Natural killer cell (primary cell): ENCODE measurements at regions of chr18 and their contacts with region 1.

Region 1: GRCh38 chr18:67302043-67302442 is 214.5 kb downstream of the DSEL start:
- DNase-seq: peak in 1 of 2 donors; percentile 9
- ATAC-seq: peak in 1 of 3 donors; percentile 31
- H3K4me3 ChIP-seq: no peak overlapping the region
- H3K4me3 Mint-ChIP-seq: no peak overlapping the region
- H3K27ac ChIP-seq: no peak overlapping the region
- H3K27ac Mint-ChIP-seq: peak overlapping the region in 1 of 2 donors; percentile 23
- H3K4me1 ChIP-seq: no peaks in the 10 kb centered on the region
- H3K4me1 Mint-ChIP-seq: peaks cover 0 to 8% of the 10 kb centered on the region in 2 donors
- H3K27me3 ChIP-seq: no peaks in the 10 kb centered on the region
- H3K27me3 Mint-ChIP-seq: no peaks in the 10 kb centered on the region
- CTCF ChIP-seq: no peak

Region 2: GRCh38 chr18:67290421-67290820 is 11.6 kb before region 1 on chr18:
- intact Hi-C with region 1: no loop called
- DNase-seq: no peak
- ATAC-seq: no peak
- H3K4me3 ChIP-seq: no peak overlapping the region
- H3K4me3 Mint-ChIP-seq: no peak overlapping the region
- H3K27ac ChIP-seq: no peak overlapping the region
- H3K27ac Mint-ChIP-seq: no peak overlapping the region
- H3K4me1 ChIP-seq: no peaks in the 10 kb centered on the region
- H3K4me1 Mint-ChIP-seq: no peaks in the 10 kb centered on the region
- H3K27me3 ChIP-seq: no peaks in the 10 kb centered on the region
- H3K27me3 Mint-ChIP-seq: no peaks in the 10 kb centered on the region
- CTCF ChIP-seq: no peak

Region 3: DNA sequence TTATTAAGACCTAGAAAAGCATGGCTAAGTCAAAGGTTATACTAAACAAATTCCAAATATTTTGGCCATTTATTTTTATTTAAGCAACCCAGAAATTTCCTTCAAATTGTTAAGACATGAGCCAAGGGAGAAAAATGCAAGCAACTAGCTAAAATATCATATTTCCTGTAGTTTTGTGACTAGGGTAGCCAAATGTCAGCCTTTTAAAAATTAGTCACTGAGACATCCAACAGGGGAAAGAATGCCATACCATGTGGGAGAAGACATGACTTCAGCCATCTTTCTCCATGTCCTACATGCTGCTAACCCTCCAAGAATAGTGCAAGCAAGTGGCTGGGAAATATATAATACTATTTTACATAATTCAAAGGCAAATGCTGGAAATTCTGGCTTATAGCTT is 16.6 kb after region 1 on chr18:
- intact Hi-C with region 1: loop called (anchors 2 kb)
- DNase-seq: no peak
- ATAC-seq: no peak
- H3K4me3 ChIP-seq: no peak overlapping the region
- H3K4me3 Mint-ChIP-seq: no peak overlapping the region
- H3K27ac ChIP-seq: no peak overlapping the region
- H3K27ac Mint-ChIP-seq: no peak overlapping the region
- H3K4me1 ChIP-seq: no peaks in the 10 kb centered on the region
- H3K4me1 Mint-ChIP-seq: no peaks in the 10 kb centered on the region
- H3K27me3 ChIP-seq: no peaks in the 10 kb centered on the region
- H3K27me3 Mint-ChIP-seq: no peaks in the 10 kb centered on the region
- CTCF ChIP-seq: no peak

Region 4: DNA sequence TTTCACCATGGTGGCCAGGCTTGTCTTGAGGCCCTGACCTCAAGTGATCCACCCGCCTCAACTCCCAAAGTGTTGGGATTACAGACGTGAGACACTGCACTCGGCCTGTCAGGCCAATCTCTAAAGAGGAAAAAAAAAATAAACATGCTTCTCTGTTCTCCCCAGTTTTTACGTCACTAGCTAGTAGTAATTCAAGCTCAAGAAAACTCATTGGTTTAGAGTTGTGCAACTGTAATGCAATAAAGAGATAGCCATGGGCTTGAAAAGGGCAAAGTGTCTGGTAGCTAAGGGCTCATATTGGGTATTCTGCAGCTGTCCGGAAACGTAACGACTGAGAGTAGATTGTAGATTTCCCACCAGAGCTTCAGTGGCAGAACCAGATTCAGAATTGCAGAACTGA is 326.6 kb after region 1 on chr18:
- intact Hi-C with region 1: no loop called
- DNase-seq: no peak
- ATAC-seq: no peak
- H3K4me3 ChIP-seq: no peak overlapping the region
- H3K4me3 Mint-ChIP-seq: no peak overlapping the region
- H3K27ac ChIP-seq: no peak overlapping the region
- H3K27ac Mint-ChIP-seq: no peak overlapping the region
- H3K4me1 ChIP-seq: no peaks in the 10 kb centered on the region
- H3K4me1 Mint-ChIP-seq: no peaks in the 10 kb centered on the region
- H3K27me3 ChIP-seq: no peaks in the 10 kb centered on the region
- H3K27me3 Mint-ChIP-seq: no peaks in the 10 kb centered on the region
- CTCF ChIP-seq: no peak